ENCODE measurements at regions of chr16 and their contacts with region 1.

Region 1: DNA sequence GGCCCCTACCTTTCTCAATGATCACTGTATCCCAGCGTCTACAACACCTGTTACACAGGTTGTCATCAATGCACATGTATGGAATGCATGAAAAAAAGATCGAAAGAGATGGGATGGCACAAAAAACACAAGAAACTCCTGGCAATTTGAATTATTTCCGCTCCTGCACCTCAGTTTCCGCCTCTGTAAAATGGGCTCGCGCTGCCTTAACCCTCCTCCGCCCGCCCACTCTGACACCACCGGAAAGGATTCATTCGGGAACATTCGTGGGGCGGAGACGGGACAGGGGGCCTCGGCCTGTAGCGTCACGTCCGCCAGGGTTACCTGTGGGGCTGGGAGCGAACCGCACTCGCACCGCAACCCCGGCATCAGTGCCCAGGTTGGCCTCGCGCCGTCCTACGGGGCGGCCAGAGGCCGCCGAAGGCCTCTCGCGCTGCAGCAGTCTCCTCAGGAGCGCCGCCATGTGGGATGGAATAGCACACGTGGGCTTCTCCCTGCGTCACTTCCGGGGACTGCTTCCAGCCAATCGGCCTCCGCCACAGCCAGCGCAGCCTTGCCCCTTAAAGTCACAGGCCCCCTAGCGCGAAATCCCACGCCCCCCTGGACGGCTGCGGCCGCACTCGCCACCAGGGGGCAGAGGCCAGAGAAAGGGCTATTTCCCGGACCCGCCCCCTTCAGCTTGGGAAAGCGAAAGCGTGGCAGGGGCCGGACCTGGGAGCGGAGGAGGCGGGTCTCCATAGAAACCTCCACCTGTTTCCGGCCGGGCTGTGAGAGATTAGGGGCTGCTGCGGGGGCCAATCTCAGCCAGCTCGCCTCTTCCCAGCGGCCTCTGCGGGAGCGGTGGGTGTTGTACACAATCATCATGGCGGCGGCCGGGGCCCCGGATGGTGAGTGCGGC is at the starts of genes EARS2 and UBFD1:
- DNase-seq: peak; percentile 97
- H3K4me3 Mint-ChIP-seq: peak within 1 kb of the TSS; percentile 89
- H3K27ac Mint-ChIP-seq: peak within 1 kb of the TSS; percentile 85
- H3K4me1 Mint-ChIP-seq: peaks cover 47% of the 10 kb centered on the region
- H3K27me3 Mint-ChIP-seq: no peaks in the 10 kb centered on the region
- total RNA-seq, gene EARS2: 23.7 to 25.1 TPM
- total RNA-seq, gene UBFD1: 52.3 to 54.6 TPM

Region 2: GRCh38 chr16:23149349-23149996 is 407.7 kb before region 1 on chr16 and contains the start of gene USP31:
- CTCF ChIA-PET with region 1: no interaction called
- intact Hi-C with region 1: loop called (anchors 2 kb)
- DNase-seq: peak; percentile 93
- H3K4me3 Mint-ChIP-seq: peak within 1 kb of the TSS; percentile 95
- H3K27ac Mint-ChIP-seq: no peak within 1 kb of the TSS
- H3K4me1 Mint-ChIP-seq: peaks cover 21% of the 10 kb centered on the region
- H3K27me3 Mint-ChIP-seq: no peaks in the 10 kb centered on the region
- total RNA-seq, gene USP31: 5.1 to 5.2 TPM

Region 3: DNA sequence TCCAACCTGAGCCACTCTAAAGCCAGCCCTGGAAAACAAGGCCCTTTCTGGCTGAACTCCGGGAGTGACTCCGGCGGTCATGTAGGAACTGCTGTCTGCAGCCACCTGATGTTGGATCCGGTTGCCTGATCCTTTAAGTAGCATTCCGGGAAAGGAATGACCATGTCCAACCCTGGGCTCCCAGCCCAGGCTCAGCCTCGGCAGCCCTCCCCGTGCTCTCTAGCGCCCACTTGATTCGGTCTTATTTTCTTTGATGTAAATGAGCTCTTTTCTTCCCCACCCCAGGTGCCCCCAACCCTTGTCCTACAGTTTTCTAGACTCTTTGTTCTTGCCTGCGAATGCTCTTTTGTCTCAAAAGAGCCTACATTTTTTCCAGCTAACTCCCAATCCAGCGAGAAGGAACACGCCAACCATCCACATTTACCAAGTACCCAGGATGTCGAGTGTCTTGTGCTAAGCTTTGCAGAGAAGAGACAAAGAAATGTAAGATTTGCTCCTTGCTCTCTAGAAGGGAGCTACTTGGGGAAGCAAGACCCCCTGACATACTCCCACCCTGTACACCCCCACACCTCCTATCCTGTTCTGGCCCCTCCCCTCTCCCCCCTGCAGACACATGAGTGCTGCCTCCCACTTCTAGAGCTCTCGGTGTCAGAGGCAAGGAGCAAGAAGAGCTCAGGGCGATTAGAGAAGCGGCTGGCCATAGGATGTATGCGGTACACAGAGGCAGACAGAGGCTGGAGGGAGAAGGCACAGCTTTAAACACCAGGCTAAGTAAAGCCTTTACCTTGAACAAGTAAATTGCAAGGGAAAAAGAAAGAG is 157.9 kb before region 1 on chr16:
- CTCF ChIA-PET with region 1: no interaction called
- intact Hi-C with region 1: no loop called
- DNase-seq: no peak
- H3K4me3 Mint-ChIP-seq: no peak overlapping the region
- H3K27ac Mint-ChIP-seq: no peak overlapping the region
- H3K4me1 Mint-ChIP-seq: no peaks in the 10 kb centered on the region
- H3K27me3 Mint-ChIP-seq: no peaks in the 10 kb centered on the region

Region 4: GRCh38 chr16:23504451-23505179 is 52.5 kb before region 1 on chr16:
- CTCF ChIA-PET with region 1: interaction called, 4 read pairs
- intact Hi-C with region 1: loop called (anchors 1 kb)
- DNase-seq: peak; percentile 91
- H3K4me3 Mint-ChIP-seq: no peak overlapping the region
- H3K27ac Mint-ChIP-seq: no peak overlapping the region
- H3K4me1 Mint-ChIP-seq: peaks cover 67% of the 10 kb centered on the region
- H3K27me3 Mint-ChIP-seq: no peaks in the 10 kb centered on the region

Region 5: GRCh38 chr16:23595951-23596720 is 39.0 kb after region 1 on chr16 and contains the start of gene NDUFAB1:
- CTCF ChIA-PET with region 1: interaction called, 8 read pairs
- intact Hi-C with region 1: loop called (anchors 1 kb)
- DNase-seq: peak; percentile 93
- H3K4me3 Mint-ChIP-seq: peak within 1 kb of the TSS; percentile 79
- H3K27ac Mint-ChIP-seq: peak within 1 kb of the TSS; percentile 76
- H3K4me1 Mint-ChIP-seq: peaks cover 39% of the 10 kb centered on the region
- H3K27me3 Mint-ChIP-seq: no peaks in the 10 kb centered on the region
- total RNA-seq, gene NDUFAB1: 163 to 170 TPM

Region 6: GRCh38 chr16:23670137-23670776 is 113.1 kb after region 1 on chr16:
- CTCF ChIA-PET with region 1: no interaction called
- intact Hi-C with region 1: loop called (anchors 1 kb)
- DNase-seq: peak; percentile 82
- H3K4me3 Mint-ChIP-seq: no peak overlapping the region
- H3K27ac Mint-ChIP-seq: peak overlapping the region; percentile 13
- H3K4me1 Mint-ChIP-seq: peaks cover 16% of the 10 kb centered on the region
- H3K27me3 Mint-ChIP-seq: no peaks in the 10 kb centered on the region